ENCODE measurements at regions of chr2 and their contacts with region 1.

Region 1: GRCh38 chr2:128321784-128322714 is 3.4 kb upstream of the HS6ST1 start:
- DNase-seq: peak; percentile 58 to 87 (median 76)
- ATAC-seq: peak; percentile 76
- H3K4me3 ChIP-seq: peak overlapping the region; percentile 68
- H3K4me3 Mint-ChIP-seq: peak overlapping the region; percentile 70 to 92 (median 76)
- H3K27ac ChIP-seq: peak overlapping the region; percentile 64
- H3K27ac Mint-ChIP-seq: peak overlapping the region in 6 of 9 donors; percentile 28 to 80 (median 50)
- H3K4me1 ChIP-seq: peaks cover 10 to 18% of the 10 kb centered on the region in 2 donors
- H3K4me1 Mint-ChIP-seq: peaks cover 10 to 24% (median 14%) of the 10 kb centered on the region in 7 donors
- H3K27me3 ChIP-seq: no peaks in the 10 kb centered on the region
- H3K27me3 Mint-ChIP-seq: peaks cover 0 to 16% (median 0%) of the 10 kb centered on the region in 5 donors

Region 2: GRCh38 chr2:128027801-128028667 is 294.0 kb before region 1 on chr2 and contains the start of gene SAP130:
- CTCF ChIA-PET with region 1: no interaction called
- POLR2A ChIA-PET with region 1: no interaction called
- intact Hi-C with region 1: loop called (anchors 5 kb)
- DNase-seq: peak; percentile 96 to 99 (median 98)
- ATAC-seq: peak; percentile 86
- H3K4me3 ChIP-seq: peak within 1 kb of the TSS; percentile 86
- H3K4me3 Mint-ChIP-seq: peak within 1 kb of the TSS; percentile 87 to 98 (median 98)
- H3K27ac ChIP-seq: peak within 1 kb of the TSS; percentile 91
- H3K27ac Mint-ChIP-seq: peak within 1 kb of the TSS; percentile 52 to 97 (median 93)
- H3K4me1 ChIP-seq: peaks cover 0 to 14% of the 10 kb centered on the region in 2 donors
- H3K4me1 Mint-ChIP-seq: peaks cover 14 to 32% (median 28%) of the 10 kb centered on the region in 7 donors
- H3K27me3 ChIP-seq: no peaks in the 10 kb centered on the region
- H3K27me3 Mint-ChIP-seq: peaks cover 0 to 16% (median 0%) of the 10 kb centered on the region in 5 donors
- total RNA-seq, gene SAP130: 29.9 to 38.0 (median 30.9) TPM

Region 3: DNA sequence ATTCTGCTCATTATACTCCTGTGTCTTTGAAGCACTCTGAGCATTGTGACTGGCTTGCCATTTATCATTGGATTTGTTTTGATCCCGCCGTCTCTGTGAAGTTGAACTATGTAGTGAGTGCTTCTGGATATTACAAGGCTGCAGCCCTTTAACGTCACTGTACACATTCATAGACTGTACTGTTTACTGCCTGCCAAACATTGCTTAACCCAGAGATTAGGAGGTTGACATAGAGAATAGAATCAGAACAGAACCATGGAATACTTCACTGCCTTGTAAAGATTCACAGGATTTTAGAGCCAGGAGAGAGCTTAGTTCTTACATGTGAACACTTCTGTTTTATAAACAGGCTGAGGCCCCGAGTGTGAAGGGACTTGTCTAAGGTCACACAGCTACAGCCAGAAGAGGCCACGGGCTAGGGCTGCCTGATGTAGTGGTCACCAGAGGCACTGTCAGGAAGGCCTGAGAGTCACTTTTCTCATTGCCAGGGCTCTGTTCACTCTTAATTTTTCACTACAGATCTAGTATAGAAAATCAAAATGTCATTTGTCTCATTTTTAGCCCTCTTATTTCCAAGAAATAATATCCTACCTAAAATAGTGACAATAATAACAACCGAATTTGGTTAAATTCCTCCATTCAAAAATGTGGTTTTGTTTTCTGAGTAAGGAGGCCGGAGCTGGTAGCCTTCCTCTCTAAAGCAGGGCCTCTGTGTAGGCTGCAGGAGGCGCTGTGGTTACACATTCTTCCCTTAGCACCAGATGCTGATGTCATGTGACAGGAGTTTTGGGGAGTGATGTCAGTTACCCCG is 143.2 kb before region 1 on chr2:
- CTCF ChIA-PET with region 1: no interaction called
- POLR2A ChIA-PET with region 1: no interaction called
- intact Hi-C with region 1: loop called in 1 of 2 experiments (anchors 5 kb)
- DNase-seq: peak in 8 of 9 donors; percentile 19 to 53 (median 36)
- ATAC-seq: peak; percentile 92
- H3K4me3 ChIP-seq: no peak overlapping the region
- H3K4me3 Mint-ChIP-seq: no peak overlapping the region
- H3K27ac ChIP-seq: no peak overlapping the region
- H3K27ac Mint-ChIP-seq: no peak overlapping the region
- H3K4me1 ChIP-seq: no peaks in the 10 kb centered on the region
- H3K4me1 Mint-ChIP-seq: peaks cover 0 to 8% (median 0%) of the 10 kb centered on the region in 7 donors
- H3K27me3 ChIP-seq: no peaks in the 10 kb centered on the region
- H3K27me3 Mint-ChIP-seq: no peaks in the 10 kb centered on the region

Region 4: GRCh38 chr2:128217671-128218070 is 104.4 kb before region 1 on chr2:
- CTCF ChIA-PET with region 1: no interaction called
- POLR2A ChIA-PET with region 1: no interaction called
- intact Hi-C with region 1: no loop called
- DNase-seq: no peak
- ATAC-seq: peak; percentile 46
- H3K4me3 ChIP-seq: no peak overlapping the region
- H3K4me3 Mint-ChIP-seq: no peak overlapping the region
- H3K27ac ChIP-seq: no peak overlapping the region
- H3K27ac Mint-ChIP-seq: no peak overlapping the region
- H3K4me1 ChIP-seq: no peaks in the 10 kb centered on the region
- H3K4me1 Mint-ChIP-seq: peaks cover 0 to 13% (median 3%) of the 10 kb centered on the region in 7 donors
- H3K27me3 ChIP-seq: no peaks in the 10 kb centered on the region
- H3K27me3 Mint-ChIP-seq: peaks cover 0 to 3% (median 0%) of the 10 kb centered on the region in 5 donors

Region 5: DNA sequence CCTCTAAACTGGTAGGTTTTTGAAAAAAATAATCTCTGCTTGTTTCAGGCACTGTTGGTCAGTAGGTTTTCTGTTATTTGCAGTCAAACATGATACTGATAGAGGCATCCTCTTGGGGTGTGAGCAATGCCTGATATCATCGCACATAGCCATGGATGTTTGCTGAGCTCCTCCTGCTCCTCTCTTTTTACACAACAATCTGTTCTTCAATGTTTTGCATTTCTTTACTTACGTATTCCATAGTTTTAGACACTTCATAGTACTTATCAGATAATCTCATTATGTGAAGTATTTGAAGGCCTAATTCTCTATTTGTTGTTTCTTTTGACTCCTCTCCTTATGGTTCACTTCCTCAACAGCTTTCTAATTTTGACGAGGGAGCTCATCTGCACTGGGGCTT is 19.6 kb after region 1 on chr2:
- CTCF ChIA-PET with region 1: no interaction called
- POLR2A ChIA-PET with region 1: no interaction called
- intact Hi-C with region 1: no loop called
- DNase-seq: no peak
- ATAC-seq: no peak
- H3K4me3 ChIP-seq: no peak overlapping the region
- H3K4me3 Mint-ChIP-seq: no peak overlapping the region
- H3K27ac ChIP-seq: no peak overlapping the region
- H3K27ac Mint-ChIP-seq: no peak overlapping the region
- H3K4me1 ChIP-seq: no peaks in the 10 kb centered on the region
- H3K4me1 Mint-ChIP-seq: no peaks in the 10 kb centered on the region
- H3K27me3 ChIP-seq: no peaks in the 10 kb centered on the region
- H3K27me3 Mint-ChIP-seq: peaks cover 0 to 3% (median 0%) of the 10 kb centered on the region in 5 donors

Region 6: GRCh38 chr2:128395640-128396499 is 73.8 kb after region 1 on chr2:
- CTCF ChIA-PET with region 1: no interaction called
- POLR2A ChIA-PET with region 1: no interaction called
- intact Hi-C with region 1: no loop called
- DNase-seq: no peak
- ATAC-seq: no peak
- H3K4me3 ChIP-seq: no peak overlapping the region
- H3K4me3 Mint-ChIP-seq: no peak overlapping the region
- H3K27ac ChIP-seq: no peak overlapping the region
- H3K27ac Mint-ChIP-seq: no peak overlapping the region
- H3K4me1 ChIP-seq: no peaks in the 10 kb centered on the region
- H3K4me1 Mint-ChIP-seq: peaks cover 0 to 4% (median 0%) of the 10 kb centered on the region in 7 donors
- H3K27me3 ChIP-seq: no peaks in the 10 kb centered on the region
- H3K27me3 Mint-ChIP-seq: peaks cover 0 to 16% (median 5%) of the 10 kb centered on the region in 5 donors

Region 7: GRCh38 chr2:128736689-128737545 is 414.9 kb after region 1 on chr2:
- CTCF ChIA-PET with region 1: no interaction called
- POLR2A ChIA-PET with region 1: no interaction called
- intact Hi-C with region 1: loop called in 1 of 2 experiments (anchors 1 kb)
- DNase-seq: peak in 8 of 9 donors; percentile 5 to 72 (median 45)
- ATAC-seq: peak; percentile 61
- H3K4me3 ChIP-seq: no peak overlapping the region
- H3K4me3 Mint-ChIP-seq: peak overlapping the region in 8 of 10 donors; percentile 10 to 56 (median 40)
- H3K27ac ChIP-seq: no peak overlapping the region
- H3K27ac Mint-ChIP-seq: no peak overlapping the region
- H3K4me1 ChIP-seq: peaks cover 0 to 5% of the 10 kb centered on the region in 2 donors
- H3K4me1 Mint-ChIP-seq: peaks cover 4 to 13% (median 11%) of the 10 kb centered on the region in 7 donors
- H3K27me3 ChIP-seq: no peaks in the 10 kb centered on the region
- H3K27me3 Mint-ChIP-seq: peaks cover 9 to 60% (median 23%) of the 10 kb centered on the region in 5 donors

Region 8: DNA sequence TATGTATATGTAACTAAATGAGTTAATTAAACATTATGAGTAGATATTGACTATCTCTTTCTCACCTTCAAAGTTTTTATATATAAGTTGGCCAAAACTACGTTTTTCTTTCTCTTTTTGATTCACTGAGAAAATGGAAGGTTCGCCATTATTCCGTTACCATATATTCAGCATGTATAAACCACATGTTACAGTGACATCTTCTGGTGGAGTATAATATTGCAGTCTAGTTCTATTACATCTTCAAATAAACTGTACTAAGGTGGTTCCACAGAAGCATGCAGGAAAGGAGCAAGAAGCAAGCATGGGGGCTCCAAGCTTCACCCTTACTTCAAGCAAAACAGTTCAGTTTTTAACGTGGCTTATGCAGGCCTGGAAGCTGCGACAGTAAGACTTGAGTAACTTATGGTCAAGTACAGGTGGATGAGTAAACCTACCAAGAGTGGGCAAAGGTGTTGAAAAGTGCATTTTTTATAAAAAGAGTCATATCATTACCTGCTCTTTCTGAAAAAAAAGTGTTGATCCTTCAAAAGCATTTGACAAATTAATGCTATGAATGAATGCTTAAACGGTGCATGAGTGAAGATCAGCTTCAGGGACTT is 1527.6 kb after region 1 on chr2:
- CTCF ChIA-PET with region 1: no interaction called
- POLR2A ChIA-PET with region 1: no interaction called
- intact Hi-C with region 1: loop called (anchors 1 to 10 kb)
- DNase-seq: peak in 7 of 9 donors; percentile 28 to 71 (median 59)
- ATAC-seq: peak; percentile 95
- H3K4me3 ChIP-seq: no peak overlapping the region
- H3K4me3 Mint-ChIP-seq: peak overlapping the region in 4 of 10 donors; percentile 7 to 57 (median 24)
- H3K27ac ChIP-seq: no peak overlapping the region
- H3K27ac Mint-ChIP-seq: no peak overlapping the region
- H3K4me1 ChIP-seq: no peaks in the 10 kb centered on the region
- H3K4me1 Mint-ChIP-seq: peaks cover 0 to 5% (median 0%) of the 10 kb centered on the region in 7 donors
- H3K27me3 ChIP-seq: no peaks in the 10 kb centered on the region
- H3K27me3 Mint-ChIP-seq: peaks cover 8 to 35% (median 20%) of the 10 kb centered on the region in 5 donors

Region 9: GRCh38 chr2:129923265-129924091 is 1601.4 kb after region 1 on chr2:
- CTCF ChIA-PET with region 1: no interaction called
- POLR2A ChIA-PET with region 1: no interaction called
- intact Hi-C with region 1: loop called in 1 of 2 experiments (anchors 5 kb)
- DNase-seq: peak in 4 of 9 donors; percentile 3 to 15 (median 8)
- ATAC-seq: peak; percentile 46
- H3K4me3 ChIP-seq: no peak overlapping the region
- H3K4me3 Mint-ChIP-seq: peak overlapping the region in 8 of 10 donors; percentile 22 to 78 (median 49)
- H3K27ac ChIP-seq: no peak overlapping the region
- H3K27ac Mint-ChIP-seq: peak overlapping the region in 1 of 9 donors; percentile 9
- H3K4me1 ChIP-seq: no peaks in the 10 kb centered on the region
- H3K4me1 Mint-ChIP-seq: peaks cover 0 to 7% (median 6%) of the 10 kb centered on the region in 7 donors
- H3K27me3 ChIP-seq: no peaks in the 10 kb centered on the region
- H3K27me3 Mint-ChIP-seq: peaks cover 30 to 46% (median 42%) of the 10 kb centered on the region in 5 donors